ENCODE measurements at regions of chr12 and their contacts with region 1.

Region 1: DNA sequence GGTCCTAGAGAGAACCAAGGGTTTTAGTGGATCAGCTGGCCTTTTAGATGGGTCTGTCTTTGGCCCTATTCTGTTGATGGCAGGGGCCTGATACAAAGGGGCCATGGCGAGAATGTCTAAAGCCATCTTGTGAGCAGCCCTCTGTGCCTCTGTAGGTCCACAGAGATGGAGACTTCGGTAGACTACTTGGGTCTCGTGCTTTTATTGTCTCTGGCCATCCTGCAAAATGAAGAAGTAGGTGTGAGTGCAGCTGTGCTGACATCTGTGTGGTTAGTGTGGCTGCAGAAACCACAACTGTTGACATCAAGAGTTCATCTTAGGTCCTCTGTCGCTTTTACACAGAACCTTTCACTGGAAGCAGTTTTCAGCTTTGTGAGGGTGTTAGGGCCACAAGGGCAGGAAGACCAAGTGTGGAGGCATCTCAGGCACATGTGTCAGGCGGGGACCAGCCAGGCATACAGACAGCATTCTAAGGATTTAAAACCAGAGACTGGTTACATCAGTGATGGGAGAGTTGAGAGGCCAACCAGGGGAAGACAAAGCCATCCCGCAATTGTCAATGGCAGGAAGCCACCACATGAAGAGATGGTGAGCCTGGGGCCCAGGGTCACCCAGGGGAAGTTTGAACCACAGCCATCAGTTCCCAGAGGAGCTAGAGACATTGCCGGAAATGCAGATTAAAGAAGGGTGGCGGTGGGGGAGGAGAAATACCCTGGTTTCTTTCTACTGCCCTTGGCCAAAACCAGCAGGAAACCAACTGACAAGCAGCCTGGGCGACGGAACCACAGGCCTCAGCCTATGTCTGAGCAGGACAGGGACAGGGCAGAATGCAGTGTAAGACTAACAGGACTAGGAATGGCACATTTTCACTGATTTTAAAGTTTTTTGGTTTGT is 13.0 kb upstream of the TPCN1 start:
- DNase-seq: peak; percentile 98
- H3K4me3 ChIP-seq: peak overlapping the region; percentile 59
- H3K27ac ChIP-seq: peak overlapping the region; percentile 99
- H3K4me1 ChIP-seq: peaks cover 91% of the 10 kb centered on the region
- CTCF ChIP-seq: no peak

Region 2: DNA sequence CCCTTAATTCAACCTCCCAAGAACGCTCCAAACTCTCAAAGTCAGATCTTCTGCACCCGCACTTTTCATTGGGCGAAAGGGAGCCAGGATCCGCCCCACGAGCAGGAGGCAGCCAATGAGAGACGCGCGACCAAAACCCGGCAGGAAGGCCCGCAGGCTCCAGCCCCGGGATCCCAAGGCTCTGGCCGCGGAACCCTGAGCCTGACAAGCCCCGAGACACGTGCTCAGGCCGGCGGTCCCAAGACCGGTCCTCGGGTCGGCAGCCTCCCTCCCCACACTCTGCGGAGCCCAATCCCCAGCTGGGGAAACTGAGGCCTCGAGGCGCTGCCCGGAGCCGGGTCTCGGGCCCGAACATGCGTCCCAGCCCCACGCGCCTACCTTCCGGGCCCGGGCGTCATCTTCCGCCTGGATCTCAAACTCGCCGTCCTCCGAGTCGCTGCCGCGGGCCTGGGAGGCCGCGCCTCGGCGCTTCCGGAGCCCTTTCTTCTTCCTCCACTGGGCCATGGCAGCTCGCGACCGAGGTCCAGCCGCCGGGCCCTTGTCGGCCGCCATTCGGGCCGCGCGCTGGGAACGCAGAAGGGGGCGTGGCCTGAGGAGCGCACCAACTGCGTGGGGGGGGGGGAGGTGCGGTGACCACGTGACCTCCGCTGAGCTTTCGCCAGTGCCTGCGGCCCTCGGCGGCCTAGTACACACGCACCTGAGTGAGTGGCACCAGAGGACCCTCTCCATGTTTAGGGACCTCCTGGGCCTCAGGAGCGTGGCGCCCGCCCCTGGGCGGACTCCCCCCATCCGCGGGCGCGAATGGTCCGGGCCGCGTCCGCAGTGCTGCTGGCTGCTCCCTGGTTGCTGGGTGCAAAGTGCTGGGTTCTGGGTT is 23.2 kb before region 1 on chr12 and contains the starts of genes DDX54 and RITA1:
- CTCF ChIA-PET with region 1: no interaction called
- POLR2A ChIA-PET with region 1: interaction called, 8 read pairs
- intact Hi-C with region 1: loop called (anchors 1 kb)
- DNase-seq: peak; percentile 95
- H3K4me3 ChIP-seq: peak within 1 kb of the TSS; percentile 92
- H3K27ac ChIP-seq: peak within 1 kb of the TSS; percentile 86
- H3K4me1 ChIP-seq: peaks cover 44% of the 10 kb centered on the region
- CTCF ChIP-seq: no peak
- total RNA-seq, gene DDX54: 86.0 and 87.2 TPM in 2 replicates
- total RNA-seq, gene RITA1: 72.5 and 90.8 TPM in 2 replicates

Region 3: DNA sequence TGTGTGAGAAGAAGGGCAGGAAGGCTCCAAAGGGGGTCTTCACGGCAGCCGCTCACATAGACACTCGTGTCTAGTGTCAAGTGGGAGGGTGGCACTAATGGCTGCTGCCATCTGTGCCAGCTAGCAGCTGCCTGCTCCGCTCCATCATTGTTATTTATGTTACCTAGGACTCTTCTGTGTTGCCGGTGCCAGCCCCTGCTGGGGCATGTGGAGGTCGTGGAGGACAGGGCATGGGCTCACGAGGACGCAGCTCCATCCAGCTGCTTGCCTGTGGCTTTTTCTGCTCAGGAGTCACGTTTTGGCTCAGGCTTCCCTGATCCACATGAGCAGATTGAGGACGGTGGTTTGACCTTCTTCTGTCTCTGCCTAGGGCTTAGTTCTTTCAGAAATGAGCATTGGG is 44.2 kb after region 1 on chr12:
- CTCF ChIA-PET with region 1: no interaction called
- POLR2A ChIA-PET with region 1: no interaction called
- intact Hi-C with region 1: no loop called
- DNase-seq: no peak
- H3K4me3 ChIP-seq: no peak overlapping the region
- H3K27ac ChIP-seq: no peak overlapping the region
- H3K4me1 ChIP-seq: peaks cover 22% of the 10 kb centered on the region
- CTCF ChIP-seq: no peak

Measured in OCI-LY7 (cell line).